KBM-7 (cell line): ENCODE measurements at regions of chr12 and their contacts with region 1.

Region 1: DNA sequence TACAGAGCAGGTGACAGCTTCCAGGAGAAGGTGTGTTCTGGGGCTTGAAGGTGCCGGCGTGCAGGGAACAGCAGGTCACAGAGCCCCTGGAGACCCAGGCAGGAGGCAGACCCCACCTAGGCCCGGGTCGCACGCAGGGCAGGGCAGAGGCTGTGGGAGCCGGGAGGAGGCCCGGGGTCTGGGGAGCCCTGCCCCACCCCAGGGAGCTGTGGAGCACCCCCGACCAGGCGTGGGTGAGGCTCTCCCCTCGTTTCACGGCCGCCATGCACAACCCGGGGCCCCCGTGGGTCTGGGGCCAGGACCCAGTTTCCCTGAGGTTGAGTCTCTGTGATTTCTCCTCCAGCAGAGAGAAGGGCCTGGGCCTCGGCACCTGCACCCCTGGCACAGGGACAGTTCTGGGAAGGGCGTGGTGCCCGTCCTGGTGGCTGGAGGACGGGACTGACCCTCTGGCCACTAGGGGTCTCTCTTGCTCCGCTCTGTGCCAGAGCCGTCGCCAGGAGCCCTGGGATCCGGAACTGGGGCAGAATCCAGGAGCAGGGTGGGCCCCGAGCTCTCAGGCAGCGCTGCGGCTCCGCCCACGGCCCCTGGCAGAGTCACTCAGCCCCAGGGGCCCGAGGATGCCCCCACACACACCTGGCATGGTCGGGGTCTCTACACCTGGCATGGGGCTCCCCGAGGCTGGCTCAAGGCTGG is 75.2 kb upstream of the FBRSL1 start:
- DNase-seq: peak; percentile 84

Region 2: DNA sequence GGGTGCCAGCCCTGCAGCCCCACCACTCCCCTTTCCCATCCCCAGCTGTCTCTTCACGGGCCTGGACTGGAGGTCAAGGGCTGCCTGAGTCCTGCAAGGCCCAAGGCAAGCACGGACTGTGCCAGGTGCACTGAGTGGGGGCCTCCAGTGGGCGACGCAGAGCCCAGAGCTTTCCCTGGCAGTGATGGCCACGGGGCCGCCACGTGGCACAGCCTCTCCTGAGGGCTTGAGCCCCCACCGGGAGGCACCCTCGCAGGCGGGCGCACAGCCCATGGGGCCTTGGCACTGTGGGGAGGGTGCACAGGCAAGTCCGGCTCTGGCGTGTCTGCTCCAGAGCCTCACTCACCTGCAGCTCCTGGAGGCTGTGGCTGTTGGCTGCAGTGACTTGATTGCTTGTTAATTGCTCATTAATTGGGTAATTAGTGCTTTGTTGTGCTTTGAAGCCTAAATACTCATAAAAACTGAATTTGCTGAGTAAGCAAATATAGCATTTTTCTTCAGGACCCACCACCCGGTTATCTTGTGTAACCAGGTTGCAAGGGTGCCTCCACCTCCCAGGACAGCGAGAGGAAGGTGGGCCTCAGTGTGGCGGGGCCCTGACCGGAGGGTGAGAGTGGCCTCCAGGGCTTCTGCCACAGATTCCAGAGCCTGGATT is 123.7 kb after region 1 on chr12:
- in situ Hi-C with region 1: loop called (anchors 10 kb)
- DNase-seq: no peak

Region 3: DNA sequence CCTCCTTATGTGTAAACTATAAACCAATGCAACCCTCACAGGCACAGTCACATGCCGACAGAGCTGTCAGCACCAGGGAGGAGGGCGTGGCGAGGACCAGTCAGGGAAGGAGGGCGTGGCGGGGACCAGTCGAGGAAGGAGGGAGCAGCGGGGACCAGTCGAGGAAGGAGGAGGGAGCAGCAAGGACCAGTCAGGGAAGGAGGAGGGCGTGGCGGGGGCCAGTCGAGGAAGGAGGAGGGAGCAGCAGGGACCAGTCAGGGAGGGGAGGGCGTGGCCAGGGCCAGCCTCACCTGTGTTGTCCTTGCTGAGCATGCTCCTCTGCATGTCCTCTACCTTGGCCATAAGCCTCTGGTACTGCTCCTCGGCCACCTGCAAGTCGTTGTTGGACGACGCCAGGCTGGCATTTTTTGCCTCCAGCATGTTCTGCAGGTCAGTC is 389.7 kb after region 1 on chr12:
- in situ Hi-C with region 1: no loop called
- DNase-seq: no peak